Ascending aorta (tissue), 2 donors: ENCODE measurements at regions of chr22 and their contacts with region 1.

Region 1: DNA sequence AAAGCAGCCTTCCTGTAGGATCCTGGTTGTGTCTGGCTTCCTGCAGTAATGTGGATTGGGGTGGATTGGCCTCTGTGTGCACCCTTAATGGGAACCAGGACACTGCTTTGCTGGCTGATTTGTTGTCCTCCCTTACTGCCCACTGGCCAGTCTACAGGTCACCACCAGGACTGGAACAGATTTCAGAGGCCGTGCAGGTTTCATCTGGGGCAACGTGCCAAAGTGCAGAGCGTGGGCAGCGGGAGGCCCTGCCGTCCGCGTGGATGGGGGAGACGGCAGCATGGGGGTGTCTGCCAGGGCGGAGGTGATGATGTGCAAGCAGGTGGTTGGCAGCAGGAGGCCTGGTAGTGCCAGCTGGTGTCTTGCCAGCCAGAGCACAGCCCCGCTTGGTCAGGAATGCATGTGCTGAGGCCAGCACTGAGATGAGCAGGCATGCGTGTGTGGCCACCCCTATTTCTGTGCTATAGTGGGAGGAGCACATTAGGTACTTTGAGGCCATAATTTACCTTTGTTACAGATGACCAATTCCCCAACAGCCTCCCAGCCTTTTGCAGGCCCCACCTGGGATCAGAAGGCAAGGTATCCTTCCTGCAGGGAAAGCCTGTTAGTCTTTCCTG is 24.3 kb downstream of the BCR start:
- DNase-seq: peak in 1 of 2 donors; percentile 82
- H3K4me3 ChIP-seq: peak overlapping the region in 1 of 2 donors; percentile 1
- H3K27ac ChIP-seq: peak overlapping the region; percentile 75 to 79
- H3K4me1 ChIP-seq: peaks cover 25 to 46% of the 10 kb centered on the region in 2 donors
- H3K27me3 ChIP-seq: no peaks in the 10 kb centered on the region
- CTCF ChIP-seq: no peak

Region 2: DNA sequence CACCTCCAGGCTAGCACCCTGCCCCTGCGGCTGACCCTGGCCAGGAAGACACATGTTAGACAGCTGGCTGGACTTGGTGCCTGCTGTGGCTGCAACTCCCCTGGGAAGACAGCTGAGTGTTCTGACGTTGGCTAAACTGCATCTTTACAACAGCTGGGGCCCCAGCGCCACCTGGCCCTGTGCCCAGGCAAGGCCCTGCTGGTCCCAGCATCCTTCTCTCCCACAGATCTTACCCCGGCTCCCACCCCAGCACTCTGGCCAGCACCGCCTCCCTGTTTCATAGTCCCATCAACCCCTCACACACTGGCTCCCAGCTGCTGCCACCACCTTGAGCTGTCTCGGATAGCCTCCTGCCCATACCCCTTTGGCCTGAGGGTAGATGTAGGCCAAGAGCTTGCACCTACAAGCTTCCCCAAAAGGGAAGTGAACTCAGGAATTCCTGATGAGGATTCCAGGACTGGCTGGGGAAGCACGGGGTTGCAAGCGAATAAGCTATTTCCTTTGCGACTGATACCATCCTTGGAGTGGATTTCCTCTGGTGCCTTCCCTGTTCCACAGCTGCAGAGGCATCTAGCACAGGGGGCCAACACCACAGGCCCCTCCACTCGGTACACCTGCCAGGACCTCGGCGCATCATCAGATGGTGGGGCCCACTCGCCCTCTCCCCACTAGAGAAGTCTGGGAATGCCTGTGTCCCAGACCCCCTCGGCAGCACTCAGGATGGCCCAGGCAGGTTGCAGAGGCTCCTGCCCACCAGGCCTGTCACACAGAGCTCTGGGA is 91.4 kb before region 1 on chr22:
- intact Hi-C with region 1: no loop called
- DNase-seq: no peak
- H3K4me3 ChIP-seq: no peak overlapping the region
- H3K27ac ChIP-seq: no peak overlapping the region
- H3K4me1 ChIP-seq: no peaks in the 10 kb centered on the region
- H3K27me3 ChIP-seq: no peaks in the 10 kb centered on the region
- CTCF ChIP-seq: no peak

Region 3: GRCh38 chr22:23124611-23125511 is 79.8 kb before region 1 on chr22:
- intact Hi-C with region 1: no loop called
- DNase-seq: no peak
- H3K4me3 ChIP-seq: no peak overlapping the region
- H3K27ac ChIP-seq: no peak overlapping the region
- H3K4me1 ChIP-seq: no peaks in the 10 kb centered on the region
- H3K27me3 ChIP-seq: no peaks in the 10 kb centered on the region
- CTCF ChIP-seq: no peak

Region 4: DNA sequence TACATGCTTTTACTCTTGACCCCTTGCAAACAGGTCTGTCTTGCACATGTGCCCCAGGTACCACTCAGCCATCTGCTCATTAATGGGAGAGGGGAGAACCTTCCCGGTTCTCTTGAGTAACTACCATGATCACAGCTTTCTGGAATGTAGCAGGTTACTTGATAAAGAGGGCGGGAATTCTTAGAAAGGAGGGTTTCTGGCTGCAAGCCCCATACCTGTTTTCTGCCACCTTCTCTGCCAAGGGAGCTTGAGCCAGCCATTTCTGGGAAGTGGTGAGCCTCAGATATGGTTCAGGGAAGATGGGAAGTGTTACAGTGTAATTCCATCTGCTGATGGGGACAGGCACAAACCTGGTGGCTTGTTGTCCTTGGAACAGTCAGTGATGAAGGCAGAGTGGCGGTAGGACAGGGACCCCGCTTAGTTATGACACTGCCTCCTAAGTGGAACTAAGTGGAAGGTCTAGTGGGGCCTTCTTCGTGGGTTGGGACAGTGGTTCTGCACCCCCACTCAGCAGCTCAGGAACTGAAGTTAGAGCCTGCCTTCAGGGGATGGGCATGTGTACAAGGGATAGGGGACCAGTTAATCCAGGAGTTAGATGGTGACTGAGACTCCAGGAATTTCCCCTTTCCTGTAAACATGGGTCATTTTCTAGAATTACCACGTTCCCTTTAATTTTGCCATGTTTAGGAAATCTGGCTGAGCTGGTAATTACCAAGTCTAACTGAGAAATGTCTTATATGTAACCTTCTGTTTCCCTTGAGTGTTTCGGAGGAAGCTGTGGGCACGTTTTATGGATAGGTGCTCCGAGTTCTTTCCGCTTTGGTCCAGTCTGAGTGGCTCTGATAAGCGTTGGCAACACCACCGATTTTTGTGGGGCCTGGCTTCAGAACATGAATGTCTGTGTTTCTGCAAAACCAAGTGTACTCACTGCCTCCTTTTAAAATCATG is 10.9 kb after region 1 on chr22:
- intact Hi-C with region 1: loop called (anchors 1 kb)
- DNase-seq: peak in 1 of 2 donors; percentile 82
- H3K4me3 ChIP-seq: peak overlapping the region in 1 of 2 donors; percentile 27
- H3K27ac ChIP-seq: peak overlapping the region; percentile 58 to 75
- H3K4me1 ChIP-seq: peaks cover 4 to 76% of the 10 kb centered on the region in 2 donors
- H3K27me3 ChIP-seq: no peaks in the 10 kb centered on the region
- CTCF ChIP-seq: no peak

Region 5: DNA sequence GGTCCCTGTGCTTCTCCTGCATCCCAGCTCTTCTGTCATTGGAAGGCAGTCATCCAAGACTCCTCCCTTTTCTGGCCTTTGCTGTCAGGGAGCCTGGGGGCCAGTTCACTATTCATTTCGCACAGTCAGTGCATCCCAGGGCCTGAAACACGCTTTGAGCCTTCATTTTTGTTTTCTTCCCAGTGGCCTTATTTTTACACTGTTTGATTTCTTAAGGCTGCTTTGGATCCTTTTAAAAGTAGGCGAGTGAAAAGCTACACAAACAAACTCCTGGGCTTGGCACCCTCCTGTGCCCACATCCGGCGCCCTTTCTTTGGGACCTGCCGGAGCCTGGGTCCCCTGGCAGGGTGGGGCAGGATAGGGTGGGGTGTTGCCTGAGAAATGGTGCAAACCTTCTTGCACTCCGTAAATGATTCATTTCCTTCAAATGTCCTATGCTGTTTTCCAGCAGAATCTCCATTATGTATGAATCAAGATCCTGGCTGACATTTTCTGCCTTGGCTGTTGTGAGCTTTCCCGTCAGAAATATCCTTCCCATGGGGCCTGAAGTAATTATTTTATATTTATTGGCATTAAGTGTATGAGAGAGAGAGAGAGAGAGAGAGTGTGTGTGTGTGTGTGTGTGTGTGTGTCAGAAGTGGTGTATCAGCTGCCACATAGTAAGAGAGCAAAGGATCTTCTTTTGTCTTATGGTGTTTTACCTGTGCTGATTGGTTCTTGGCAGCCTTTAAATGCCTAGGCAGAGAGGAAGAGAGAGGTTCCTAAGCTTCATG is 21.3 kb after region 1 on chr22:
- intact Hi-C with region 1: loop called (anchors 1 kb)
- DNase-seq: peak in 1 of 2 donors; percentile 93
- H3K4me3 ChIP-seq: peak overlapping the region in 1 of 2 donors; percentile 9
- H3K27ac ChIP-seq: peak overlapping the region; percentile 85 to 88
- H3K4me1 ChIP-seq: peaks cover 7 to 55% of the 10 kb centered on the region in 2 donors
- H3K27me3 ChIP-seq: no peaks in the 10 kb centered on the region
- CTCF ChIP-seq: no peak

Region 6: DNA sequence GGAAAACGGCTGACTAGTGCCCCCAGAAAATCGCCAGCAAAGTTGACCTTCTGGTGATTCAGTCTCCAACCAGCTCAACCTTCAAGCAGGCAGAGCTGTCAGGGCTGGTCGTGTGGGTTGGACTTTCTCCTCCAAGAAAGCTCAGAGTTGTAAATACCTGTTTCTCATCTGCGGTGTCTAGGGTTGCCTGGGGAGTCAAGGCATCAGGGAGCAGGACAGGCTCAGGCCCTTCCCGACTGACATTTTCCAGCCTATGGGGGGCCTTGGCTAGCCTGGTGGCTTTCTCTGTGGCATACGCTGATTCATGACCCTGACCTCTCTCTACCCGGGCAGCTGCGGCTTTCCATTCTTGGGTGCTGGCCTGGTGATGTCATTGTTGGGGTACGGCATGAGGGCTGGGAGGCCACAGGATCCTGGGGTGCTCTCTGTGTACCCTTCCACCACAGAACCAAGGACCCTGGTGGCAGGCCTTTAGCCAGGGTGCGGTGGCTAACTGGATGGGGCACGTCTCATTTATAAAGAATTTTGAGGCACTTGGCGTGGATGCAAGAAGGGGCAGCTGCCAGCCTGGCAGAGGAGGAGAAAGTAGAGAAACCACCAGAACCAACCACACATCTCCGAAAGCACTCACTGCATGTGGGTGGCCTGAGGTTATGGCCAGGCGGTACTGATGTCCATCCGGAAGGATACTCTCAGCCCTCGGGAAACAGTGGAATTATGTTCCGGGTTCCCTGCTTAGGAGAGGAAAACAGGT is 40.6 kb after region 1 on chr22:
- intact Hi-C with region 1: loop called (anchors 2 kb)
- DNase-seq: no peak
- H3K4me3 ChIP-seq: no peak overlapping the region
- H3K27ac ChIP-seq: peak overlapping the region; percentile 60 to 82
- H3K4me1 ChIP-seq: peaks cover 0 to 33% of the 10 kb centered on the region in 2 donors
- H3K27me3 ChIP-seq: no peaks in the 10 kb centered on the region
- CTCF ChIP-seq: no peak

Region 7: DNA sequence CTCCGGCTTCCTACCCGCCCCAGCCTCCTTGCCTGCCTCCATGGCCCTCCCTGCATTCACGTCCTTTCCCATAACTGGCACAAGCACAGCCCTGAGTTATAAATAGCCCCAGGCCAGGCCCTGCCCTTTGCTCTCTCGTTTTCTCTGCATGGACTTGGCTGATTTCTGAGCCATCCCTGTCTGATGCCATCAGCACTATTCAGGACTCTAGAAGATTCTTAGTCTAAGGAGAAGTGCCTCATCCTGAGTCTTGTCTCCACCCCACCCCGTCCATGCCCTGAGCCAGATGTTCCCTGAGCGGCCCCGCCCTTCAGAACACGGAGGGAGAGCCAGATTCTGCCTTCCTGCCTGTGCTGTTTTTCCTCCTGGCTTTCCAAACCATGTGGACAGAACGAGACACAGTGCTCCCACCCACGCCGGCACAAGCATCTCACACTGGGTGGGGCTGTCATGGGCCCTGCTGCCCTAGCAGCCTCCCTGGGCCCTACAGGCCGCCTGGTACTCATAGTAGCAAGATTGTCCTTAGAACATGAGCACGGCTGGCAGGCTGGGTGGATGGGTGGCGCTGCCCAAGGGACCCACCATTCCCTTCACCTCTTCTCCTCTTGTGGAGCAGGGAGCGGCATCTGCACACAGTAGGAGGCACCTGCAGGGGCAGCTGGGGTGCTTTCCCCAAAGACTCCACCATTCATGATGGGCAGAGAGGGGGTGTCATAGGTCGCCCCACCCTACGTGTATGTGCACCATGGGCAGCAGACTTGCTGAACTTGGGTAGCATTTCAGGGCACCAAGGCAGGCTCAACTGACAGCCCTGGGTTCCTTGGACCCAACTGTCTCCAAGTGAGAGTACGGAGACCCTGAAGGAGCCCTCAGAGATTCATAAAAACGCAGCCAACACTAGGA is 52.6 kb after region 1 on chr22:
- intact Hi-C with region 1: loop called (anchors 2 kb)
- DNase-seq: peak; percentile 39 to 92
- H3K4me3 ChIP-seq: no peak overlapping the region
- H3K27ac ChIP-seq: peak overlapping the region; percentile 82 to 90
- H3K4me1 ChIP-seq: peaks cover 12 to 35% of the 10 kb centered on the region in 2 donors
- H3K27me3 ChIP-seq: no peaks in the 10 kb centered on the region
- CTCF ChIP-seq: no peak

Region 8: DNA sequence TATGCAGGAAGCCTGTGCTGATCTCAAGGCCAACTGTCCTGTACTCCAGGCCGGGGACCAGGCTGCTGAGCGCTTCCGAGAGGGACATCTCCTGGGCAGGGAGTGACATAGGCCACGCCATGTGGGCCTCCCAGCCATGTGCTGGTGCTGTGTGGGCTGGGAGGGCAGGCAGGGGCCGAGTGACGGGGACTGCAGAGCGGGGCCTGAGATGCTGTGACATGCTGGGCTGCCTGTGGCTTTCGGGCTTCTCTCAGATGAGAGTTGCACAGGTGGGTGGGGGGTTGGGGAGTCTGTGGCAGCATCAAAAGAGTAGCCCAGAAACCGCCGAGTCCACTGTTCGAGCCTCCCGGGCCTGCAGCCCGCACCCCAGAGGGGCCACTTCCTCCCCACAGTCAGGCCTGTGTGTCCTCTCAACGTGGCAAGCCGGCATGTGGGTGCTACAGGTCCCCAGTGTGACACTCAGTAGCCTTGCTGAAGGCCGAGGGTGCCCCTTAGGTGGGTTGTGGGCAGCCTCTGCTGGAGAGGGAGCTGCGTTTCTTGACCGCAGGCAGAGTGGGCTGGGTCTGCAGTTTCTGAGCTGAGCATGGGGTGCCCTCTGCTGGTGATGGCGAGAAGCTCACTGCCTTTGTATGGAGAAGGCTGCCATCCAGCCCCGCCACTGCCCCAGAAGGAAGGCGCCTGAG is 76.9 kb after region 1 on chr22:
- intact Hi-C with region 1: no loop called
- DNase-seq: peak; percentile 59 to 93
- H3K4me3 ChIP-seq: peak overlapping the region in 1 of 2 donors; percentile 20
- H3K27ac ChIP-seq: peak overlapping the region; percentile 86 to 93
- H3K4me1 ChIP-seq: peaks cover 7 to 44% of the 10 kb centered on the region in 2 donors
- H3K27me3 ChIP-seq: no peaks in the 10 kb centered on the region
- CTCF ChIP-seq: peak; percentile 95 to 98 (median 97)

Region 9: GRCh38 chr22:23305922-23306374 is 101.3 kb after region 1 on chr22:
- intact Hi-C with region 1: no loop called
- DNase-seq: peak; percentile 69 to 94
- H3K4me3 ChIP-seq: no peak overlapping the region
- H3K27ac ChIP-seq: peak overlapping the region; percentile 89 to 90
- H3K4me1 ChIP-seq: peaks cover 13 to 26% of the 10 kb centered on the region in 2 donors
- H3K27me3 ChIP-seq: no peaks in the 10 kb centered on the region
- CTCF ChIP-seq: no peak